ENCODE measurements at regions of chr15 and their contacts with region 1.

Region 1: DNA sequence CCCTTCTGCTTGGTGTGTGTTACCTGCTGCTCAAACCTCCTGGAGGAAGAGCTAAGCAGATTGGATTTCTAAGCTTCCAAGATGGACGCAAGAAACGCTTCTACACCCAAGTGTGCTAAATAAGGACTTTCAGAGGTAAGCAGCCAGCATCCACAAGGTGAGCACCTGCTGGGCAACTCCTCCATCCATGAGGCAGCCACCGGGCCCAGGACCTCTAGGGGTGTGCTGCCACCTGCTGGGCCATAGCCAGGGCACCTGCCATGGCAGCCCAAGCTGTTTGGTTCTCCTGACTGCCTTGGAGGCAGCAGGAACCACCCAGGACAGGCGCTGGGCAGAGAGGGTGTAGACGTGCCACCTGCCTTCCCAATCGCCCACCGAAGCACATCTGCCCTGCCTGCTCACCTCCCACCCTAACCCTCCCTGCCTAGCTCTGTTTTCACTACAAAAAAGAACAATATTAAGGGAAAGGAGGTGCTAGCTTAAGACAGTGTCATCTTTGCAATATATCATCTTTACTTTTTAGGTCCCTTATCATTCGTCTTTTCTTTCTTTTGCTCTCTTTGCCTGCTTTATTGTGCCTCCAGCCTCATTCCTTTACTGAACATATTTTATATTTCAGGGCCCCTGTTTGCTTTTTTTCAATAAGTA is 12.9 kb downstream of the C15orf62 start:
- DNase-seq: no peak
- H3K4me3 ChIP-seq: no peak overlapping the region
- H3K27ac ChIP-seq: no peak overlapping the region
- H3K4me1 ChIP-seq: peaks cover 25% of the 10 kb centered on the region
- H3K27me3 ChIP-seq: no peaks in the 10 kb centered on the region
- CTCF ChIP-seq: peak; percentile 82 to 97 (median 93)

Region 2: GRCh38 chr15:40582726-40583246 is 199.9 kb before region 1 on chr15:
- dilution Hi-C with region 1: no loop called
- DNase-seq: no peak
- H3K4me3 ChIP-seq: peak overlapping the region in 1 of 3 experiments; percentile 26
- H3K27ac ChIP-seq: no peak overlapping the region
- H3K4me1 ChIP-seq: no peaks in the 10 kb centered on the region
- H3K27me3 ChIP-seq: no peaks in the 10 kb centered on the region
- CTCF ChIP-seq: no peak

Region 3: DNA sequence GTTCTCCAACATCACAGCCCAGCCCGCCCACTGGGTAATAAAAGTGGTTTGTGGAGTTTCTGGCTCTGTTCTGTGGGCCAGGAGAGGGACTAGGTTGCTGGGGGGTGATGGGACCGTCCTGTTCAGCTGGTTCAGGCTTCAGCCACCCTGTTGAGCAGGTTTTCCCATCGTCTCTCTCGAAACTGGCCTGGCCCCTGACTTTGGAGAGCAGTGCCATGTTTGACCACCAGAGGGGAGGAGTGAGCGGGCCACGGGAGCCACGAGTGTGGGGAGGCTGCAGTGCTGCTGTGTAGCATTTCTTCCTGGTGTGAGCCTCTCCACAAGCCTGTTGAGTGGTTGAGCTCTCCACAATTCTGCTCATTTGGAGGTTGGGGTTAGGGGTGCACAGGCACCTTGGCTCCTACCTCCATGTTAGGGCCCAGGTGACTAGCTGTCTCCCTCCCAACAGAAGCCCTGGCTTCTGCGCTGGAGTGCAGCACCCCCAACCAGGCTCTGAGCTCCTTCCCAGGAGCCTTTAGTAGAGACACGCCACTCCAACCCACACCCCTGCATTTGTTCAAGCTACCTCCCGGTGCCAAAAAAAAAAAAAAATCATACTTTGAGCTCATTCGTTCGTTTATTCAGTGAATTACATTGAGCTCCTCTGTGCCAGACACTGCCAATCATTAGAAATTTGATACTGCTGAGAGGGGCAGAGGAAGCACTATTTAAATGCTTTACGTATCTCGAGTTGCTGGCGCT is 75.1 kb after region 1 on chr15:
- dilution Hi-C with region 1: no loop called
- DNase-seq: no peak
- H3K4me3 ChIP-seq: no peak overlapping the region
- H3K27ac ChIP-seq: peak overlapping the region; percentile 45
- H3K4me1 ChIP-seq: peaks cover 12% of the 10 kb centered on the region
- H3K27me3 ChIP-seq: no peaks in the 10 kb centered on the region
- CTCF ChIP-seq: peak; percentile 98 to 99 (median 98)

Region 4: GRCh38 chr15:40879604-40880003 is 96.9 kb after region 1 on chr15:
- dilution Hi-C with region 1: loop called (anchors 10 kb)
- DNase-seq: no peak
- H3K4me3 ChIP-seq: no peak overlapping the region
- H3K27ac ChIP-seq: no peak overlapping the region
- H3K4me1 ChIP-seq: peaks cover 29% of the 10 kb centered on the region
- H3K27me3 ChIP-seq: no peaks in the 10 kb centered on the region
- CTCF ChIP-seq: no peak

Region 5: GRCh38 chr15:41096178-41096577 is 313.5 kb after region 1 on chr15:
- dilution Hi-C with region 1: no loop called
- DNase-seq: no peak
- H3K4me3 ChIP-seq: no peak overlapping the region
- H3K27ac ChIP-seq: no peak overlapping the region
- H3K4me1 ChIP-seq: no peaks in the 10 kb centered on the region
- H3K27me3 ChIP-seq: no peaks in the 10 kb centered on the region
- CTCF ChIP-seq: no peak